IMR-90 (cell line): ENCODE measurements at regions of chr14 and their contacts with region 1.

Region 1: GRCh38 chr14:88385345-88386101 is at the start of gene SPATA7:
- DNase-seq: peak; percentile 89
- ATAC-seq: peak; percentile 98
- H3K4me3 ChIP-seq: peak within 1 kb of the TSS; percentile 82
- H3K27ac ChIP-seq: peak within 1 kb of the TSS; percentile 95
- H3K4me1 ChIP-seq: no peaks in the 10 kb centered on the region; the same call in 1 of the 2 replicates
- H3K27me3 ChIP-seq: no peaks in the 10 kb centered on the region
- CTCF ChIP-seq: no peak
- POLR2A ChIP-seq: peak; percentile 51
- RAD21 ChIP-seq: no peak
- total RNA-seq, gene SPATA7: 10.0 and 12.8 TPM in 2 replicates

Region 2: GRCh38 chr14:88452231-88452630 is 66.7 kb after region 1 on chr14:
- CTCF ChIA-PET with region 1: no interaction called
- POLR2A ChIA-PET with region 1: no interaction called
- dilution Hi-C with region 1: no loop called
- in situ Hi-C with region 1: no loop called
- intact Hi-C with region 1: no loop called
- DNase-seq: no peak
- ATAC-seq: no peak
- H3K4me3 ChIP-seq: no peak overlapping the region
- H3K27ac ChIP-seq: no peak overlapping the region
- H3K4me1 ChIP-seq: 0 out of 2 replicates have a peak, but pooled peaks cover 2% of the 10 kb centered on the region
- H3K27me3 ChIP-seq: no peaks in the 10 kb centered on the region
- CTCF ChIP-seq: no peak
- POLR2A ChIP-seq: no peak
- RAD21 ChIP-seq: no peak

Region 3: GRCh38 chr14:88551094-88551870 is 165.8 kb after region 1 on chr14:
- CTCF ChIA-PET with region 1: no interaction called
- POLR2A ChIA-PET with region 1: no interaction called
- dilution Hi-C with region 1: no loop called
- in situ Hi-C with region 1: loop called (anchors 10 kb)
- intact Hi-C with region 1: no loop called
- DNase-seq: peak; percentile 82
- ATAC-seq: peak; percentile 68
- H3K4me3 ChIP-seq: peak overlapping the region; percentile 71
- H3K27ac ChIP-seq: peak overlapping the region; percentile 65
- H3K4me1 ChIP-seq: peaks cover 4% of the 10 kb centered on the region; the same call in 1 of the 2 replicates
- H3K27me3 ChIP-seq: no peaks in the 10 kb centered on the region
- CTCF ChIP-seq: peak; percentile 40
- POLR2A ChIP-seq: no peak
- RAD21 ChIP-seq: peak; percentile 39

Region 4: DNA sequence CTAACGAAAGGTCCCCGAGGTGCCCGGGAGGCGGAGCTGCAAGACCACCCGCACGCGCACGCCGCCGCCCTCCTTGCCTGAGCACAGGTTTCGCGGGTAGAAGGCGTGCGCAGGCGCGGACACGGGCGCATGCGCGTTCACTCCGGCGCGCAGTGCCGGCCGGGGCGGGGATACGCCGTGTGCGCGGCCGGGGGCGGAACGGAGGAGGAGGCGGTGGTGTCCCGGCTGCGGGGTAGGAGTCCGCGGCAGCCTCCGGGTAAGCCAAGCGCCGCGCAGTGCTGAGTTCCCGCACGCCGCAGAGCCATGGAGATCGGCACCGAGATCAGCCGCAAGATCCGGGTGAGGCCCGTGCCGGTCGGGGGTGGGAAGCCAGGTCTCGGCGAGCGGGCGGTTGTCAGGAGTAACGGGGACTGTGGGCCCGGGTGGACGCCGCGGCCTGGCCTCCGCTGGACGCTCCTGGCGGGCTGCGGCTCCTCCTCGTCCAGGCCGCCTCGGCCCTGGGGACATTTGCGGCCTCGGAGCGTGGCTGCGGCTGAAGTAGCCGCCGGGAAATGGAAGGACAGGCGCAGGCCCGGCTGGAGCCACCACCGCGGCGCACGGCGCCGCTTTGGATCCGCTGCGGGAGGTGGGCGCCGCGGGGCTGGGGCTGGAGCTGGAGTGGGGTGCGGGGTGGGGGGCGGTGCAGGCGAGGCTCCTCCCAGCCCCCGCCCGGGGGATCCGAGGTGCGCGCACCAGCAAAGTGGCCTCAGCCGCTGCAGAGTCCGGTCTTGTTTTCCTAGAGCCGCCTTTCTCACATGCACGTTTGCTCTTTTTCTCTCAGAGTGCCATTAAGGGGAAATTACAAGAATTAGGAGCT is 177.5 kb after region 1 on chr14 and contains the start of gene ZC3H14:
- CTCF ChIA-PET with region 1: interaction called, 3 read pairs
- POLR2A ChIA-PET with region 1: no interaction called
- dilution Hi-C with region 1: no loop called
- in situ Hi-C with region 1: loop called (anchors 10 kb)
- intact Hi-C with region 1: loop called (anchors 5 kb)
- DNase-seq: peak; percentile 80
- ATAC-seq: peak; percentile 95
- H3K4me3 ChIP-seq: peak within 1 kb of the TSS; percentile 98
- H3K27ac ChIP-seq: peak within 1 kb of the TSS; percentile 94
- H3K4me1 ChIP-seq: peaks cover 6% of the 10 kb centered on the region; the same call in 1 of the 2 replicates
- H3K27me3 ChIP-seq: no peaks in the 10 kb centered on the region
- CTCF ChIP-seq: no peak
- POLR2A ChIP-seq: peak; percentile 61; the same call in 1 of the 2 replicates
- RAD21 ChIP-seq: no peak
- total RNA-seq, gene ZC3H14: 103 and 111 TPM in 2 replicates

Region 5: GRCh38 chr14:89371585-89372511 is 986.3 kb after region 1 on chr14:
- CTCF ChIA-PET with region 1: no interaction called
- POLR2A ChIA-PET with region 1: no interaction called
- dilution Hi-C with region 1: no loop called
- in situ Hi-C with region 1: no loop called
- intact Hi-C with region 1: no loop called
- DNase-seq: peak; percentile 66
- ATAC-seq: peak; percentile 68
- H3K4me3 ChIP-seq: no peak overlapping the region
- H3K27ac ChIP-seq: no peak overlapping the region
- H3K4me1 ChIP-seq: peaks cover 25% of the 10 kb centered on the region
- H3K27me3 ChIP-seq: no peaks in the 10 kb centered on the region
- CTCF ChIP-seq: no peak
- POLR2A ChIP-seq: no peak
- RAD21 ChIP-seq: no peak